Right ventricle myocardium superior (tissue), 1 donor: ENCODE measurements at regions of chr4 and their contacts with region 1.

Region 1: GRCh38 chr4:1746265-1746691 is 25.0 kb downstream of the TACC3 start:
- DNase-seq: peak; percentile 81
- ATAC-seq: peak; percentile 83

Region 2: GRCh38 chr4:1809754-1810511 is 63.7 kb after region 1 on chr4:
- intact Hi-C with region 1: loop called (anchors 5 kb)
- DNase-seq: peak; percentile 75
- ATAC-seq: peak; percentile 79

Region 3: DNA sequence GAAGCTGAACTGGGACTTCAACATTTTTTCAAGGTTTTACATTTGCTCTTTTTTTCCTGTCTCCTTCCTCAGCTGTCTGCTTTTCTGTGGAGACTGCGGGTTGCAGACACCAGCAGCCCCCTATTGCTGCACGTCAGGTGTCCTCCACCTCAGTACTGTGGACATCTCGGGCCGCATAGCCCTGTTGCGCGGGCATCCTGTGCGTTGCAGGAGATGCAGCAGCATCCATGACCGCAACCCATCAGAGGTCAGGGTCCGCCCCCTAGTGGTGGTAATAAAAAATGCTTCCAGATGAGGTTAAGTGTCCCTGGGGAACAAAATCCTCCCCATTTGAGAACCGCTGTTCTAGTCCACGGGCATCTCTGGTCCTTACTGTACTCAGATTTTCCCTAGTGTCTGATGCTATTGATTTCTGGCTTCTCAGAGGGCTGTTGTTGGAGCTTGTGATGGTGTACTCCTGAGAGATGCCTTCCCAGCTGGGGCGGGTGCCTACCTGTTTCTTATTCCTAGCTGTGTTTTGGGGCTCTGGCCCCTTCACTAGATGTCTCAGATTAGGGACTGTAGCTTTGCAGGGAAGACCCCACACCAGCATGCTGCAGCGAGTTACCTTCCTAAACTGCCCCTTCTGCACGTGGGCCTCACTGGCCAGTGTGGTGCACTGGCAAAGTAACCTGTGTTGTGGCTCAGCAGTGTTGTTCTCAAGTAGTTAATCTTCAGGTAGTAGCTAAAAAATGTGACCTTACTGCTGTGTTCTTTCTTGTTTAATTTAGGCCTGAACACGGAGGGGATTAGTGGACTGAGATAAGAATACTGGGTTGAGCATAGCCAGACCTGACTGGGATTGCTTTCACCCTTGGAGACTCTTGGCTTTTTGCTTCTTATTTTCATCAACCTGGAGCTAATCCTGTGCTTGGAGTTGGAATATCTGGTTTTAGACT is 153.1 kb after region 1 on chr4:
- intact Hi-C with region 1: loop called (anchors 2 kb)
- DNase-seq: peak; percentile 70
- ATAC-seq: peak; percentile 95